AG04449 (cell line): ENCODE measurements at regions of chr9 and their contacts with region 1.

Region 1: DNA sequence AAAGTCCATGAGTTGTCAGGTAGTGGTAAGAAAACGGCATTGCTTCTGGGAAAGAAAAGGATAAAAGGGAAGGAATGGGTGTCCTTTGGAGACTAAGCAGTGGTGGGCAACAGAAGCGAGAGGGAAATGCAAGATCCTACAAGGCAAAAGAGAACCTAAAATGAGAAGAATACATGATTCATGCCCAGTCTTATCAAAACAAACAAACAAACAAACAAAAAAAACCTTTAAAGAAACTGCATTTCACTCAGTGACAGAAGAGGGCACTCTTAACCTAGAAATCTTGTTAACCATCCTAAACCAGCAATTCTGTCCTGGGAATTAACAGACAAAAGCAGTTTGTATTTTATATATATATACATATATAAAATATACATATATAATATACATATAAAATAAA is 88.5 kb downstream of the SUSD1 start:
- DNase-seq: no peak
- H3K4me3 ChIP-seq: no peak overlapping the region
- CTCF ChIP-seq: peak; percentile 34

Region 2: DNA sequence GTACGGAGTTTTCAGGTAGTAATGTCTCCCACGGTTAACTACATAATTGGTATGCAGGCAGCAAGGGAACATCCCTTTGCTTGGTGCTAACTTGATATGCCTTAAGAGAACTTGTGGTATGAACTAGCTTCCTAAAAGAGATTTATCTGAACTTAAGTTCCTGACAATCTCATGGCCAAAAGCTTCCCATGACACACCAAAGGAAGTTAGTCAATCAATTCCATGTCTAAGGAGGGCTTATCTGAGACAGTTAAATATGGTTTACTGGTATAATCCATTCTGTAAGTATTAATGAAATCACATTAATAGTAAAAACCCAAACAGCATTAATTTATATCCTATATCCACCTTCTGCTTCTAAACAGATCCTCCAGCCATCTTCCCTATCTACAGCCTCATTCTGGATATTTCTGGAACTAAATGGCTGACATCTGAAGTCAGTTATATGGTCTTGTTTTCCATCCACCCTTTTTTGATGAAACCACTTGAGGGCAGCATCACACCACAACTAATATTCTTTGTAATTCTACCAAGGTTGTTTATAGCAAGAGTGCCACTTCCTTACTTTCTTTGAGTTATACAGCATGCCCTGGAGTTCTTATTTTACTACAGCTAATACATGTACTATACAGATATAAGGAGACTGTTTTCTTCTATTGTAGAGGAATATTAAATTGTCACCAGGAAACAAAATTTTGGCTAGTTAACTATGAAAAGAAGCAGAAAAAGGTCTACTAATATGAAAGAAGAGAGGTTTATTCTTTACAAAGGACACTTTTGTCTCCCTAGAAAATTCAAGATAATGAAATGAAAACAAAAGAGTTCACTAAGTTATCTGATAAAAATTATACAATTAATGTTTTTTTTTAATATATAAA is 326.6 kb before region 1 on chr9:
- CTCF ChIA-PET with region 1: interaction called, 18 read pairs
- POLR2A ChIA-PET with region 1: interaction called, 3 read pairs
- DNase-seq: peak; percentile 65
- H3K4me3 ChIP-seq: no peak overlapping the region
- CTCF ChIP-seq: peak; percentile 47

Region 3: DNA sequence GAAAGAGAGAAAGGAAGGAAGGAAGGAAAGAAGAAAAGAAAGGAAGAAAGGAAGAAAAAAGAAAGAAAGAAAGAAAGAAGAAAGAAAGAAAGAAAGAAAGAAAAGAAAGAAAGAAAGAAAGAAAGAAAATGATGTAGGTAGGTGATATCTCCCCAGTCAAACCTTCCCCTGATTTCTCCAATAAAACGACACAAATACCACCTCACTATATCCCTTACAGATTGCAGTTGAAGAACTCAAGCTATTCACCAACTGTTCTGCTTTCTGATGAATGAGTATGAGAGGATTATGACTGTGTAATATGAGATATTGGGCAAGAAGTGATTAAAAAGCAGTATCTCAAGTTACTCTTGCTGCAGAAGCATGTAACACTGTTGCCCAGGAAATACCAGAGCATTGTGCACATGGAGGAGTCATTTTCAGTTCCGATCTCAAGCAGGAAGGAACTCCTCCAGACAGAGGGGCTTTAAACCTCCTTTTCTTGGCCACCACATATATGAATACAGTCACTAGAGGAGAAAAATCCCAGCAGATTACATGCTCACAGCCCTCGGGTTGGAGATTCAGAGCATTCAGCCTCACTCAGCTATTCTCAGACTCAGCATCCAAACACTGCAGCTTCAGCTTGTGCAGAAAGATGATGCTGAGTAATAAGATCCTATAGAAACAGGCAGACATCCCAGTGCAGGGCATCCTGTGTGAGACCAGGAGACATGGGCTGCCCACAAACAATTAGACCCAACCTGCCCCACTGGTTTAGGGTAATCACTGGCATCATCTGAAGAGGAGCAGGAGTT is 128.6 kb before region 1 on chr9:
- CTCF ChIA-PET with region 1: no interaction called
- POLR2A ChIA-PET with region 1: no interaction called
- DNase-seq: peak; percentile 99
- H3K4me3 ChIP-seq: peak overlapping the region; percentile 47
- CTCF ChIP-seq: no peak

Region 4: GRCh38 chr9:112711050-112711689 is 624.5 kb after region 1 on chr9:
- CTCF ChIA-PET with region 1: interaction called, 13 read pairs
- POLR2A ChIA-PET with region 1: no interaction called
- DNase-seq: no peak
- H3K4me3 ChIP-seq: no peak overlapping the region
- CTCF ChIP-seq: peak; percentile 57